ENCODE measurements at regions of chr4 and their contacts with region 1.

Region 1: GRCh38 chr4:114780205-114780604 is 181.6 kb downstream of the UGT8 start:
- DNase-seq: no peak
- ATAC-seq: no peak
- H3K4me3 ChIP-seq: no peak overlapping the region
- H3K27ac ChIP-seq: no peak overlapping the region
- H3K4me1 ChIP-seq: no peaks in the 10 kb centered on the region
- H3K27me3 ChIP-seq: no peaks in the 10 kb centered on the region
- CTCF ChIP-seq: no peak
- POLR2A ChIP-seq: no peak

Region 2: GRCh38 chr4:113534711-113535110 is 1245.5 kb before region 1 on chr4:
- in situ Hi-C with region 1: no loop called
- intact Hi-C with region 1: loop called (anchors 5 kb)
- DNase-seq: no peak
- ATAC-seq: no peak
- H3K4me3 ChIP-seq: no peak overlapping the region
- H3K27ac ChIP-seq: no peak overlapping the region
- H3K4me1 ChIP-seq: peaks cover 6 to 22% of the 10 kb centered on the region in 2 donors
- H3K27me3 ChIP-seq: no peaks in the 10 kb centered on the region
- CTCF ChIP-seq: no peak
- POLR2A ChIP-seq: no peak

Region 3: DNA sequence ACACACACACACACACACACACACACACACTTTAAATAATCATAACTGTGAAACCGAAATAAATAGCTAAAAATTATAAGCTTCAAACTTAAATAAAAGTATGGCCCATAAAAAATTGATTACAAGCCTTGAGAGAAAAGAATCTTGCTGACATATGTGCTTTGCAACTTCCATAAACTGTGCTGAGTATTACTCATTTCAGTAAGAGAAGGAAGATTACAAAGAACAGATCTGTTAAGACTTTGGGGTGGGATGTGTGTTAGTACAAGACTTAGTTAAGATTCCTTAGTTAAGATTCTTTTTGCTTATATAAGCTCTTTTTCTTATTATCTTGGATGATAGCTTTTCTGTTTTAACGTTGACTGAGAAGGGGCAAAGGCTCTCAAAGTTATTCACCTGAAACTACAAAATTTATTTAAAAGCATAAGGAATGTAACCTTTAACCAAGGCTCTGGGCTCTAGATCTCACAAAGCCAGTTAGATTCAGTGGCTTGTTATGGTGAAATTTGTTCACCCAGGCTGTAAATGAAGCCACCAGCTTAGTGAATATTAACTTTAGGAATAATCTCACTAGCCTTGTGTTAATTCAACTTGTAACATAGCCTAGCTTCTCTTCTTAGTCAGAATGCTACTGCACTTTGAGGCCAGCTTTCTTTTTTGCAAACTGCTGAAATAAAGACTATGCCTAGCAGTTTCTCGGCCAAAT is 859.0 kb before region 1 on chr4:
- in situ Hi-C with region 1: no loop called
- intact Hi-C with region 1: no loop called
- DNase-seq: no peak
- ATAC-seq: no peak
- H3K4me3 ChIP-seq: no peak overlapping the region
- H3K27ac ChIP-seq: no peak overlapping the region
- H3K4me1 ChIP-seq: no peaks in the 10 kb centered on the region
- H3K27me3 ChIP-seq: no peaks in the 10 kb centered on the region
- CTCF ChIP-seq: no peak
- POLR2A ChIP-seq: no peak

Region 4: GRCh38 chr4:115090483-115091075 is 310.4 kb after region 1 on chr4:
- in situ Hi-C with region 1: no loop called
- intact Hi-C with region 1: no loop called
- DNase-seq: no peak
- ATAC-seq: no peak
- H3K4me3 ChIP-seq: no peak overlapping the region
- H3K27ac ChIP-seq: no peak overlapping the region
- H3K4me1 ChIP-seq: no peaks in the 10 kb centered on the region
- H3K27me3 ChIP-seq: no peaks in the 10 kb centered on the region
- CTCF ChIP-seq: peak in 3 of 5 experiments; percentile 5 to 38 (median 19)
- POLR2A ChIP-seq: no peak

Region 5: DNA sequence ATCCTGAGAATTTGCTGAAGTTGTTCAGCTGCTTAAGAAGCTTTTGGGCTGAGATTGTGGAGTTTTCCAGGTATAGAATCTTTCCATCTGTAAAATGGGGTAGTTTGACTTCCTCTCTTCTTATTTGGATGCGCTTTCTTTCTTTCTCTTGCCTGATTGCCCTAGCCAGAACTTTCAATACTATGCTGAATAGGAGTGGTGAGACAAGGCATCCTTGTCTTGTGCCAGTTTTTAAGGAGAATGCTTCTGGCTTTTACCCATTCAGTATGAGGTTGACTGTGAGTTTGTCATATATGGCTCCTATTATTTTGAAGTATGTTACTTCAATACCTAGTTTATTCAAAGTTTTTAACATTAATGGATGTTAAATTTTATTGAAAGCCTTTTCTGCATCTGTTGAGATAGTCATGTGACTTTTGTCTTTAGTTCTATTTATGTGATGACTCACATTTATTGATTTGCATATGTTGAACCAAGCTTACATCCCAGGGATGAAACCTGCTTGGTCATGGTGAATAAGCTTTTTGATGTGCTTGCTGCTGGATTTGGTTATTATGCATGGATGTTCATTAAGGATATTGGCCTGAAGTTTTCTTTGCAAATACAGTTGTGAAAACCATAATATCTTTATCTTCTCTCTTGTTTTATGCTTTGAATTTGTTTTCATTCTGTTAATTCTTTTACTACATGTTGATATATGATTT is 907.0 kb after region 1 on chr4:
- in situ Hi-C with region 1: no loop called
- intact Hi-C with region 1: no loop called
- DNase-seq: no peak
- ATAC-seq: no peak
- H3K4me3 ChIP-seq: no peak overlapping the region
- H3K27ac ChIP-seq: no peak overlapping the region
- H3K4me1 ChIP-seq: no peaks in the 10 kb centered on the region
- H3K27me3 ChIP-seq: no peaks in the 10 kb centered on the region
- CTCF ChIP-seq: no peak
- POLR2A ChIP-seq: no peak